ENCODE measurements at regions of chr2 and their contacts with region 1.

Region 1: DNA sequence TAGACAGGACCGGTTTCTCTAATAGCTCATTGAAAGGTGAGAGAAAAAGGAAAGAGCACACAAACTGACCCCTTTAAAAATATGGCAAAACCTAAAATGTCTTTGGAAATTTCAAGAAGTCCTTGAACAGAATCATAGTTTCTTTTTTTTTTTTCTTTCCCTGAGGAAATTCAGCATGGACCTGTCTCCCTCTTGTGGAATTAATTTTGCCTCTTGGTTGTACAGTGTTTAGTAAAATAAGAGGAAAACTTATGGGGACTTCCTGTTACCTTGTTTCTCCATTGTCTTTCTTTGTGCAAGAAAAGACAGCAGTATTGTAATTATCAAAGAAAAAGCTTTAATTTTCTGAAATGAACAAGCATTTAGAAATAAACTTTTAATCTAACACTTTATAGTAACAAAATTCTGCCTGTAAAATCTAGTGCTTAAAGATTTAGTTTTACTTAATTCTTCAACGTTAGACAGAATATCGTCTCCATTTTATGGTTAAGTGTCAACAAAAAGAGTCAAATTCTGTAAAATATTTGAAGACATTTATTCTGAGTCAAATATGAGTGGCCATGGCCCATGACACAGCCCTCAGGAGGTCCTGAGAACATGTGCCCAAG is 176.3 kb upstream of the NABP1 start:
- DNase-seq: no peak
- H3K4me3 ChIP-seq: no peak overlapping the region
- H3K27ac ChIP-seq: peak overlapping the region in 1 of 59 donors; percentile 17
- H3K27me3 ChIP-seq: no peaks in the 10 kb centered on the region
- CTCF ChIP-seq: peak; percentile 41 to 81 (median 60)

Region 2: DNA sequence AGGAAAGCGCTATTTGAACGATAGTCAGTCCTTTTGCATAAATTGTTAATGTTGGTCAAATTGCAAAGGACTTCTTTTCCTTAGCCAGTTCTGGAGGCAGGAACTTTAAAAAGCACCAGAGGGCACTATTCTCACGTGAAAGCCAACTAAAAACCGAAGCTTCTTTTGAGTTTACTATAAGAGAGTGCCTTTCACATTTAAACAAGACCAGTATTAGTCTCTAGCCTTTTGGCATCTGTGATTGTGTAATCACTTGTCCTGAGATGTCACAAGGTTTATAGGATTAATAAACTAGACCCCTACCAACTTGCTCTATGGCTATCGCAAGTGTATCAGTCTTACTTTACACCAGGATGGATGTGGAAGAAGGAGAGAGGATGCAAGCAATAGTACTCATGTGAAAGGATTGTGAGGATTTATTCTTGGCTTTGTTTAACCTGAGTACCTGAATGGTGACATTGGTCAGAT is 336.5 kb before region 1 on chr2:
- intact Hi-C with region 1: loop called in 1 of 2 experiments (anchors 5 kb)
- DNase-seq: no peak
- H3K4me3 ChIP-seq: peak overlapping the region in 21 of 59 donors; percentile 1 to 56 (median 21)
- H3K27ac ChIP-seq: peak overlapping the region in 2 of 59 donors; percentile 21 to 46
- H3K27me3 ChIP-seq: peaks cover 0 to 2% (median 0%) of the 10 kb centered on the region in 45 donors
- CTCF ChIP-seq: peak; percentile 59 to 90 (median 74)

Region 3: DNA sequence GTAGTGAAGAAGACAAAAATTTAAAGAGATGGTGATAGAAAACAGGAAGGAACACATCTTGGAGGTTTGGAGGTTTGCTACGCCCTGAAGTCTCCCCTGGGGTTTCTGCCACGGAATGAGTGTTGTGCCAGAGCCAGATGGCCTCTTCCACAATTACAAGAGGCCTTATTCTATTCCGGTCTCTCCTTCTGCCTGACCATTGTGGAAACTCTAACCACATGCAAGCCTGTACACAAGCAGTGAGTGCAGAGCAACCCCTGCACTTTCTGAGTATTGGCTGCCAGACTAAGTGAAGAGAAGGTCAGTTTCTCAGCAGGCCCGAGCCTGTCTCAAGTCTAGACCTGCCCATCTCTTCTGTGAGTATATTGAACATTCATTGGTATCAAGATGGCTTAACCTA is 279.2 kb before region 1 on chr2:
- intact Hi-C with region 1: loop called in 1 of 2 experiments (anchors 5 kb)
- DNase-seq: no peak
- H3K4me3 ChIP-seq: no peak overlapping the region
- H3K27ac ChIP-seq: peak overlapping the region in 5 of 59 donors; percentile 22 to 54 (median 26)
- H3K27me3 ChIP-seq: peaks cover 0 to 2% (median 0%) of the 10 kb centered on the region in 45 donors
- CTCF ChIP-seq: no peak

Region 4: DNA sequence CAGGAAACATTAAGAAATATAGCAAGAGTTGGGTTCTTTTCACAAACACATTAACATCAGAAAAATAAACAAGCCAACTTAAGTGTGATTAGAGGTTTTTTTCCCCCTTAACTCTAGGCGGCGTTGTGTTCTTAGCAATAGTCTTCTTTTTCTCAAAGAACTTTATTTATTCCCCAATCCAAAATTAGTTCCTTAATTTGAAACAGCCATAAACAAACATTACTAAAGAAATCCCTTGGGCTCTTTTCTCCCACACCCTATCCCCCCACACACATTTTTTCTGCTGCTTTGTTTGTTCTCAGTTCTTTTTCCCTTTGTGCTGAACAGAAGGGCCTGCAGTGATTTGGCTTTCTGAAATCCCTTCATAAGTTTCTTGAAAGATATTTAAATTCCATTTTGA is 269.7 kb before region 1 on chr2:
- intact Hi-C with region 1: loop called (anchors 5 to 10 kb)
- DNase-seq: no peak
- H3K4me3 ChIP-seq: no peak overlapping the region
- H3K27ac ChIP-seq: peak overlapping the region in 8 of 59 donors; percentile 4 to 51 (median 28)
- H3K27me3 ChIP-seq: no peaks in the 10 kb centered on the region
- CTCF ChIP-seq: peak in 48 of 56 donors; percentile 21 to 61 (median 40)